ENCODE measurements at regions of chr6 and their contacts with region 1.

Region 1: GRCh38 chr6:14016935-14017625 is 92.3 kb downstream of the RNF182 start:
- DNase-seq: no peak
- ATAC-seq: no peak; the same call in 1 of the 2 replicates
- H3K4me3 Mint-ChIP-seq: peak overlapping the region; percentile 24
- H3K27ac Mint-ChIP-seq: no peak overlapping the region
- H3K4me1 Mint-ChIP-seq: peaks cover 32% of the 10 kb centered on the region
- H3K27me3 Mint-ChIP-seq: peaks cover 40% of the 10 kb centered on the region
- CTCF ChIP-seq: no peak

Region 2: GRCh38 chr6:13924146-13924948 is 92.7 kb before region 1 on chr6:
- CTCF ChIA-PET with region 1: interaction called, 12 read pairs
- POLR2A ChIA-PET with region 1: interaction called, 3 read pairs
- DNase-seq: peak; percentile 71
- ATAC-seq: peak; percentile 82
- H3K4me3 Mint-ChIP-seq: peak overlapping the region; percentile 86
- H3K27ac Mint-ChIP-seq: peak overlapping the region; percentile 53
- H3K4me1 Mint-ChIP-seq: peaks cover 43% of the 10 kb centered on the region
- H3K27me3 Mint-ChIP-seq: peaks cover 40% of the 10 kb centered on the region
- CTCF ChIP-seq: no peak

Region 3: GRCh38 chr6:13953061-13953705 is 63.9 kb before region 1 on chr6:
- CTCF ChIA-PET with region 1: no interaction called
- POLR2A ChIA-PET with region 1: no interaction called
- DNase-seq: no peak
- ATAC-seq: no peak
- H3K4me3 Mint-ChIP-seq: no peak overlapping the region
- H3K27ac Mint-ChIP-seq: no peak overlapping the region
- H3K4me1 Mint-ChIP-seq: peaks cover 20% of the 10 kb centered on the region
- H3K27me3 Mint-ChIP-seq: peaks cover 3% of the 10 kb centered on the region
- CTCF ChIP-seq: no peak

Region 4: GRCh38 chr6:14001329-14002012 is 15.6 kb before region 1 on chr6:
- CTCF ChIA-PET with region 1: no interaction called
- POLR2A ChIA-PET with region 1: no interaction called
- DNase-seq: no peak
- ATAC-seq: no peak
- H3K4me3 Mint-ChIP-seq: no peak overlapping the region
- H3K27ac Mint-ChIP-seq: no peak overlapping the region
- H3K4me1 Mint-ChIP-seq: peaks cover 16% of the 10 kb centered on the region
- H3K27me3 Mint-ChIP-seq: no peaks in the 10 kb centered on the region
- CTCF ChIP-seq: no peak